ENCODE measurements at regions of chr7 and their contacts with region 1.

Region 1: GRCh38 chr7:135584362-135585353 is 26.9 kb downstream of the NUP205 start:
- DNase-seq: no peak
- H3K4me3 ChIP-seq: no peak overlapping the region
- H3K27ac ChIP-seq: no peak overlapping the region
- H3K4me1 ChIP-seq: no peaks in the 10 kb centered on the region
- H3K27me3 ChIP-seq: no peaks in the 10 kb centered on the region
- CTCF ChIP-seq: no peak
- POLR2A ChIP-seq: no peak

Region 2: DNA sequence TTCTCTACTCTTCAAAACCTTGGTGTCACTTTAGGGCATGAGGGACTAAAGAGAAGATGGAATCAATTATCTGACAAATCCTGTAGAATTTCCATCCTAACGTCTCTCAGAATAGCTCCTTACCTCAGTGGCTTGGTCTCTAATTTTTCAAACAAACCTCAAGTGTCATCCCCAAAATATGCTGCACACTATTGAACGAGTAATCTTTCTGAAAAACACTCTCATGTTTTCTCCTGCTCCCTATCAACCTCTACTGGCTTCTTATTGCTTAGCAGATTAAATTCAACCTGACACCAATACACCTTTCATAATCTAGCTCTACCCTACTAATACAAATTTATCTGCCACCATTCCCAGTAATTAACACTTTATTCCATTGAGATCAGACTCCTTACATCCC is 83.3 kb before region 1 on chr7:
- intact Hi-C with region 1: no loop called
- DNase-seq: no peak
- H3K4me3 ChIP-seq: no peak overlapping the region
- H3K27ac ChIP-seq: no peak overlapping the region
- H3K4me1 ChIP-seq: peaks cover 81% of the 10 kb centered on the region
- H3K27me3 ChIP-seq: no peaks in the 10 kb centered on the region
- CTCF ChIP-seq: no peak
- POLR2A ChIP-seq: no peak

Region 3: DNA sequence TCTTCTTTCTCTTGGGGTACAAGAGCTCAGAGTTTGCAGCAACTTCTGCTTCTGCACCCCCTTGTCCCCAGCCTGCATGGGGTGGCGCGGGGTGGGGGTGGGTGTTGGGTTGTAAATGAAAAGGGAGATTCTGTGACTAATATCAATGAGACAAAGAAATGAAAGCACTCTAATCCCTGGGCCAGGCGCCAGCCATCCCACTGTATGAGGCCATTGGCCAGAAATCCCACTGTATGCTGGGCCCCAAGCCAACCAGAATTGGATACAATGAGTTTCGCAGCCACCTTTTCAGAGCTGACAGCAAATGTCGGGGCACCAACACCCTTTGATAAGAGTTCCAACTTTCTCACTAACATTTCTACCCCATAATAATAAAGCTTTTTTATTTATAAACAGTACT is 1769.7 kb after region 1 on chr7:
- intact Hi-C with region 1: loop called (anchors 10 kb)
- DNase-seq: no peak
- H3K4me3 ChIP-seq: no peak overlapping the region
- H3K27ac ChIP-seq: no peak overlapping the region
- H3K4me1 ChIP-seq: no peaks in the 10 kb centered on the region
- H3K27me3 ChIP-seq: no peaks in the 10 kb centered on the region
- CTCF ChIP-seq: no peak
- POLR2A ChIP-seq: no peak